Upper lobe of right lung (tissue), 1 donor: ENCODE measurements at regions of chr15 and their contacts with region 1.

Region 1: GRCh38 chr15:90497912-90498311 is 31.8 kb upstream of the CRTC3 start:
- DNase-seq: peak; percentile 66
- ATAC-seq: peak; percentile 88
- H3K4me3 ChIP-seq: no peak overlapping the region
- H3K27ac ChIP-seq: no peak overlapping the region
- H3K4me1 ChIP-seq: no peaks in the 10 kb centered on the region
- H3K27me3 ChIP-seq: no peaks in the 10 kb centered on the region
- CTCF ChIP-seq: no peak

Region 2: DNA sequence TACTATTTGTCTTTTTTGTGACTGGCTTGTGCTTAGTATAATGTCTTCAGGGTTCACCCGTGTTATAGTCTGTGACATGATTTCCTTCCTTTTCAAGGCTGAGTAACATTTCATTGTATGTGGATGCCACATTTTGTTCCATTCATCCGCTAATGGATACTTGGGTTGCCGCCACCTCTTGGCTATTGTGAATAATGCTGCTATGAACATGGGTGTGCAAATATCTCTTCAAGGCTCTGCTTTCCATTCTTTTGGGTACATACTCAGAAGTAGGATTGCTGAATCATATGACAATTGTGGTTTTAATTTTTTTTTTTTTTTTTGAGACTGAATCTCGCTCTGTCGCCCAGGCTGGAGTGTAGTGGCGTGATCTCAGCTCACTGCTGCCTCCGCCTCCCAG is 47.2 kb after region 1 on chr15:
- intact Hi-C with region 1: loop called (anchors 10 kb)
- DNase-seq: no peak
- ATAC-seq: no peak
- H3K4me3 ChIP-seq: no peak overlapping the region
- H3K27ac ChIP-seq: no peak overlapping the region
- H3K4me1 ChIP-seq: no peaks in the 10 kb centered on the region
- H3K27me3 ChIP-seq: no peaks in the 10 kb centered on the region
- CTCF ChIP-seq: no peak